Gastrocnemius medialis (tissue), 4 donors: ENCODE measurements at regions of chr17 and their contacts with region 1.

Region 1: GRCh38 chr17:19728079-19728495 is 11.7 kb upstream of the SLC47A2 start:
- DNase-seq: peak; percentile 88 to 92
- ATAC-seq: peak; percentile 83 to 84
- H3K4me3 ChIP-seq: no peak overlapping the region
- H3K27ac ChIP-seq: peak overlapping the region; percentile 91 to 98 (median 94)
- H3K4me1 ChIP-seq: peaks cover 34 to 39% of the 10 kb centered on the region in 2 donors
- H3K27me3 ChIP-seq: no peaks in the 10 kb centered on the region
- CTCF ChIP-seq: no peak
- POLR2A ChIP-seq: no peak

Region 2: DNA sequence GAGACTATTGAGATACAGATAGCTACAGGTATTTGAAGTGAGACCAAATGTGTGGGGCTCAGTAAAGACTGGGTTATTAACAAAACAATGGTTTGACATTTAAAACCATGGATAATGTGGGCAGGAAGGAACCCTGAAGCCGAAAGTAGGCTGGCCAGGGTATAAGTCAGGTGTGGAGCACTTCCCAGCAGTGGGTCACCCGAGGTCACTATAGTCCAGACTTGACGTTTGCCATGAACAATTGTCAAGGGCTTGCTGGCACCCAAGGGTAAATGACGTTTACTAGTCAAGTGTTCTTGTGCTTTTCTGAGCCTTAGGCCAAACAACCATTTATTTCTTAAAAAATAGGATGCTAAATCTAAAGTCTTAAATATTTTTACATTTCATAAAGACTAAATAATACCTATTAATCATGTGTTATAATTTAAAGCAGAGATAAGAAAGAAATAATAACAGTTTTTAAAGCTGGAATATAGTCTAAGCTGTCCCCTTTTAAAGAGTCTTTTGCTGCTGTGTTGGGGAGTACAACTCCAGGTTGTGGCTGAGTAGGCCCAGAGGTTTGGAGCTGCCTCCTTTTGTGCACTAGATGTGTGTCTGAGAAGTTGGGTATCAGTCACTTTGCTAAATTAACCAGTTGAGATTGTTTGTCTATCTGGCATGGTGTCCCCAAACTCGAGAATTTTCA is 63.8 kb before region 1 on chr17:
- in situ Hi-C with region 1: loop called in 1 of 4 experiments (anchors 10 kb)
- intact Hi-C with region 1: no loop called
- DNase-seq: peak in 1 of 2 donors; percentile 44
- ATAC-seq: peak in 1 of 2 donors; percentile 68
- H3K4me3 ChIP-seq: no peak overlapping the region
- H3K27ac ChIP-seq: peak overlapping the region; percentile 44 to 52 (median 48)
- H3K4me1 ChIP-seq: peaks cover 20 to 23% of the 10 kb centered on the region in 2 donors
- H3K27me3 ChIP-seq: no peaks in the 10 kb centered on the region
- CTCF ChIP-seq: no peak
- POLR2A ChIP-seq: no peak

Region 3: GRCh38 chr17:19672009-19672750 is 55.9 kb before region 1 on chr17:
- in situ Hi-C with region 1: loop called in 2 of 4 experiments (anchors 10 kb)
- intact Hi-C with region 1: no loop called
- DNase-seq: peak; percentile 59 to 77
- ATAC-seq: peak; percentile 99 to 100
- H3K4me3 ChIP-seq: no peak overlapping the region
- H3K27ac ChIP-seq: peak overlapping the region; percentile 74 to 87 (median 76)
- H3K4me1 ChIP-seq: peaks cover 0 to 15% of the 10 kb centered on the region in 2 donors
- H3K27me3 ChIP-seq: no peaks in the 10 kb centered on the region
- CTCF ChIP-seq: no peak
- POLR2A ChIP-seq: no peak

Region 4: DNA sequence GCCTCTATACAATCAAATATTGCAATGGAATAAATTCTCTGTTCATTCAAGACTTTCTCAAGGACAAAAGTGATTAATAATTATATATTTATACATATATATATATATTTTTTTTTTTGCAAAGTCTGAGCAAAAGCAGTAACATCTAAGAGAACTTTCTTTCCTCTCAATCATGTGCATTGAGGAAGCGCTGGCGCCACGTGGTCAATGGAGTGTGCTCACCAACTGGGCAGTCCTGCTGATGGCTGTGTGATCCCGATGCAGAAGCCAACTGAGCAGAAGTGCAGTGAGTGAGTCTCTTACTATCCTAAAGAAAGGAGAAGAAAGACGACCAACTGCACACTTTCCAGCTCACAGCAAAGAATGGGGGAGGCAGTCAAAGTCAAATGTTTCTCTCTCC is 176.8 kb after region 1 on chr17:
- in situ Hi-C with region 1: no loop called
- intact Hi-C with region 1: no loop called
- DNase-seq: peak; percentile 19 to 34
- ATAC-seq: no peak
- H3K4me3 ChIP-seq: no peak overlapping the region
- H3K27ac ChIP-seq: no peak overlapping the region
- H3K4me1 ChIP-seq: no peaks in the 10 kb centered on the region
- H3K27me3 ChIP-seq: no peaks in the 10 kb centered on the region
- CTCF ChIP-seq: no peak
- POLR2A ChIP-seq: no peak